T-cell (primary cell): ENCODE measurements at regions of chrX and their contacts with region 1.

Region 1: GRCh38 chrX:69140837-69141236 is 24.4 kb downstream of the PJA1 start:
- DNase-seq: no peak
- ATAC-seq: no peak
- H3K4me3 ChIP-seq: no peak overlapping the region
- H3K4me3 Mint-ChIP-seq: no peak overlapping the region
- H3K27ac ChIP-seq: no peak overlapping the region
- H3K27ac Mint-ChIP-seq: no peak overlapping the region
- H3K4me1 ChIP-seq: no peaks in the 10 kb centered on the region
- H3K4me1 Mint-ChIP-seq: no peaks in the 10 kb centered on the region
- H3K27me3 ChIP-seq: peaks cover 4 to 20% of the 10 kb centered on the region in 2 experiments
- H3K27me3 Mint-ChIP-seq: peaks cover 5 to 24% of the 10 kb centered on the region in 2 donors

Region 2: GRCh38 chrX:68835468-68835867 is 305.4 kb before region 1 on chrX:
- CTCF ChIA-PET with region 1: interaction called in 1 of 2 experiments, 10 read pairs
- POLR2A ChIA-PET with region 1: no interaction called
- DNase-seq: peak in 1 of 35 experiments; percentile 1
- ATAC-seq: no peak
- H3K4me3 ChIP-seq: no peak overlapping the region
- H3K4me3 Mint-ChIP-seq: no peak overlapping the region
- H3K27ac ChIP-seq: no peak overlapping the region
- H3K27ac Mint-ChIP-seq: no peak overlapping the region
- H3K4me1 ChIP-seq: peaks cover 0 to 14% of the 10 kb centered on the region in 2 experiments
- H3K4me1 Mint-ChIP-seq: peaks cover 13 to 24% (median 18%) of the 10 kb centered on the region in 3 donors
- H3K27me3 ChIP-seq: peaks cover 0 to under 1% of the 10 kb centered on the region in 2 experiments
- H3K27me3 Mint-ChIP-seq: no peaks in the 10 kb centered on the region

Region 3: DNA sequence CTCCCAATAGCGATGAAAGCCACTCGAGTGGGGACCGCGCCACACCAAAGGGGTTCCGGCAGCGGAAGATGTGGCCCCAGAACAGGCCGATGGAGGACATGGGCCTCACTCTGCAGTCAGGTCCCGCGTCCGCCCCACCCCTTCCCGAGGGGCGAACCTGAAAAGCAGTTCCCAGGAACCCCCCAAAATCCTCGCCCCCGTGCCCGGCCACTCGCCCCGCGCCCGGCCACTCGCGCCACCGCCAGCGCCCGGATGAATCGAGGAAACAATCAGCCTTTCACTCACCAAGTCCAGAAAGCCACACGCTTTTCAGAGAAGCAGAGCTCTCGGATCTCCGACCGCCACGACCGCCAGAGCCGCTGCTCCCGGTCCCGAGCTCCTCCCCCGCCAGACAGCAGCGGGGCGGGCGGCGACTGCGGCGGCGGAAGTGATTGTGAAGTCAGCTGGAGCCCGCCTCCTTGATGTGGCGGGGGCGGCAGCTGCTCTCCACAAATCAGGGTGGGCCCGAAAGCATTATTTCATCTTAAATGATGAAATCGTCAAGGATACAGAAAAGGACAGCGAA is 24.3 kb after region 1 on chrX and contains the start of gene PJA1:
- CTCF ChIA-PET with region 1: no interaction called
- POLR2A ChIA-PET with region 1: no interaction called
- DNase-seq: peak; percentile 43 to 78 (median 65)
- ATAC-seq: peak; percentile 73 to 82 (median 77)
- H3K4me3 ChIP-seq: peak within 1 kb of the TSS; percentile 80 to 82
- H3K4me3 Mint-ChIP-seq: peak within 1 kb of the TSS; percentile 81 to 89 (median 82)
- H3K27ac ChIP-seq: peak within 1 kb of the TSS; percentile 72
- H3K27ac Mint-ChIP-seq: peak within 1 kb of the TSS; percentile 89
- H3K4me1 ChIP-seq: peaks cover 2 to 18% of the 10 kb centered on the region in 2 experiments
- H3K4me1 Mint-ChIP-seq: peaks cover 27 to 33% (median 31%) of the 10 kb centered on the region in 3 donors
- H3K27me3 ChIP-seq: no peaks in the 10 kb centered on the region
- H3K27me3 Mint-ChIP-seq: peaks cover 0 to 9% of the 10 kb centered on the region in 2 donors
- total RNA-seq, gene PJA1: 23.8 to 32.2 (median 26.8) TPM